GM12878 (cell line): ENCODE measurements at regions of chr11 and their contacts with region 1.

Region 1: DNA sequence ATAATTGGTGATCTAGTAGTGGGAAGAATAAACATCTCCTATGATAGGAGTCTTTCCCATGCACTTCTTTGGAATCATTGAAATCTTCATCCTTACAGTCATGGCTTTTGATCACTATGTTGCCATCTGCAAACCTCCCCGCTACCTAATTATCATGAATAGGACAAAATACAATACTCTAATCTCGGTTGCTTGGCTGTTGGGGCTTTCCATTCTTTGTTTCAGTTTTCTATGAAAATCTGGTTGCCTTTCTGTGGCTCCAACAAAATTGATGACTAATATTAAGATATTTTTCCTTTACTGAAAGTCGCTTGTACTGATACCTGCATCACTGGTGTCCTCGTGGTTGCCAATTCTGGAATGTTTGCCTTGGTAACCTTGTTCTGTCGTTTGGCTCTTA is 11.9 kb downstream of the OR4C6 start:
- DNase-seq: no peak
- ATAC-seq: peak; percentile 33
- H3K4me3 ChIP-seq: no peak overlapping the region
- H3K27ac ChIP-seq: no peak overlapping the region
- H3K4me1 ChIP-seq: no peaks in the 10 kb centered on the region
- H3K27me3 ChIP-seq: no peaks in the 10 kb centered on the region
- CTCF ChIP-seq: no peak
- EP300 ChIP-seq: no peak
- POLR2A ChIP-seq: no peak
- RAD21 ChIP-seq: no peak

Region 2: DNA sequence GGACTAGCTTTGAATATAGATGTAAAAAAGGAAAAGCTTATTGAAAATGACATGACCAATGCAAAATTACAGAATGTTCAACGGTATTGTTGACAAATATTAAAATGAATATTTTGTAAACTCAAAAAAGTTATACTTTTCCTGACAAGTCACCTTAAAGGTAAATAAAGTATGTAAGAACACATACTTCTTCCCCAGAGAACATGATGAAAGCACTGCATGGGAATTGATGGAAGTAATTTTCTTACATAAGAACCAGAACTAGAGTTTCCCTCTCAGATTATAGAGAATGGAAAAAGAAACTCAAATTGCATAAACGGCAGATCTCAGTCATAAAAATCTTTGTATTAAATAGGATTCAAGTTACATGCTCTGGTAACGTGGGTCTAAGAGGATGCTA is 39.0 kb before region 1 on chr11 and contains the start of gene OR4P4:
- CTCF ChIA-PET with region 1: no interaction called
- POLR2A ChIA-PET with region 1: no interaction called
- RAD21 ChIA-PET with region 1: no interaction called
- SMC1A ChIA-PET with region 1: no interaction called
- in situ Hi-C with region 1: no loop called
- intact Hi-C with region 1: no loop called
- DNase-seq: no peak
- ATAC-seq: no peak
- H3K4me3 ChIP-seq: no peak within 1 kb of the TSS
- H3K27ac ChIP-seq: no peak within 1 kb of the TSS
- H3K4me1 ChIP-seq: no peaks in the 10 kb centered on the region
- H3K27me3 ChIP-seq: no peaks in the 10 kb centered on the region
- CTCF ChIP-seq: no peak
- EP300 ChIP-seq: no peak
- POLR2A ChIP-seq: no peak
- RAD21 ChIP-seq: no peak
- polyA plus RNA-seq, gene OR4P4: not detected

Region 3: GRCh38 chr11:55732936-55733335 is 59.1 kb after region 1 on chr11:
- CTCF ChIA-PET with region 1: no interaction called
- POLR2A ChIA-PET with region 1: no interaction called
- RAD21 ChIA-PET with region 1: no interaction called
- SMC1A ChIA-PET with region 1: no interaction called
- in situ Hi-C with region 1: loop called (anchors 10 kb)
- intact Hi-C with region 1: no loop called
- DNase-seq: no peak
- ATAC-seq: peak; percentile 78
- H3K4me3 ChIP-seq: no peak overlapping the region
- H3K27ac ChIP-seq: no peak overlapping the region
- H3K4me1 ChIP-seq: no peaks in the 10 kb centered on the region
- H3K27me3 ChIP-seq: no peaks in the 10 kb centered on the region
- CTCF ChIP-seq: no peak
- EP300 ChIP-seq: no peak
- POLR2A ChIP-seq: no peak
- RAD21 ChIP-seq: no peak

Region 4: DNA sequence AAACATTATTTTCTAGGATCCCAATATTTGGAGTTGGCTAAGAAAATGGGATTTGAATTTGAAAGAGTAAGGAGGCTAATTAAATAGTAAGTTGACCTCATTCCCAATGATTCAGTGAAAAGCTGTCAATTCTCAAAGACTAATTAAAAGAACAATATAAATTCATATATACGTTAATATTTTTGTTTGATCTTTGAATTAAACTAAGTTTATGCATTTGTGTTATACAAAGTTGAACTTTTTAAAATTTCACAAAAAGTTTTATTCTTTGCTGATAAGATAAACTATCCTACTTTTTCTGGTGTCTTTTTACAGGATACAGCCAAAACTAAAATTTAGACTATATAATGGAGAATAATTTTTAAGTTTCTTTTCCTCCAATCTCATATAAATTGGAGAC is 137.2 kb after region 1 on chr11 and contains the start of gene OR5L1:
- CTCF ChIA-PET with region 1: no interaction called
- POLR2A ChIA-PET with region 1: no interaction called
- RAD21 ChIA-PET with region 1: no interaction called
- SMC1A ChIA-PET with region 1: no interaction called
- in situ Hi-C with region 1: no loop called
- intact Hi-C with region 1: no loop called
- DNase-seq: no peak
- ATAC-seq: no peak
- H3K4me3 ChIP-seq: no peak within 1 kb of the TSS
- H3K27ac ChIP-seq: no peak within 1 kb of the TSS
- H3K4me1 ChIP-seq: no peaks in the 10 kb centered on the region
- H3K27me3 ChIP-seq: no peaks in the 10 kb centered on the region
- CTCF ChIP-seq: no peak
- EP300 ChIP-seq: no peak
- POLR2A ChIP-seq: no peak
- RAD21 ChIP-seq: no peak
- polyA plus RNA-seq, gene OR5L1: not detected